GM10248 (cell line): ENCODE measurements at regions of chr10 and their contacts with region 1.

Region 1: GRCh38 chr10:89278034-89278535 is 23.8 kb upstream of the IFIT2 start:
- DNase-seq: no peak
- CTCF ChIP-seq: no peak

Region 2: DNA sequence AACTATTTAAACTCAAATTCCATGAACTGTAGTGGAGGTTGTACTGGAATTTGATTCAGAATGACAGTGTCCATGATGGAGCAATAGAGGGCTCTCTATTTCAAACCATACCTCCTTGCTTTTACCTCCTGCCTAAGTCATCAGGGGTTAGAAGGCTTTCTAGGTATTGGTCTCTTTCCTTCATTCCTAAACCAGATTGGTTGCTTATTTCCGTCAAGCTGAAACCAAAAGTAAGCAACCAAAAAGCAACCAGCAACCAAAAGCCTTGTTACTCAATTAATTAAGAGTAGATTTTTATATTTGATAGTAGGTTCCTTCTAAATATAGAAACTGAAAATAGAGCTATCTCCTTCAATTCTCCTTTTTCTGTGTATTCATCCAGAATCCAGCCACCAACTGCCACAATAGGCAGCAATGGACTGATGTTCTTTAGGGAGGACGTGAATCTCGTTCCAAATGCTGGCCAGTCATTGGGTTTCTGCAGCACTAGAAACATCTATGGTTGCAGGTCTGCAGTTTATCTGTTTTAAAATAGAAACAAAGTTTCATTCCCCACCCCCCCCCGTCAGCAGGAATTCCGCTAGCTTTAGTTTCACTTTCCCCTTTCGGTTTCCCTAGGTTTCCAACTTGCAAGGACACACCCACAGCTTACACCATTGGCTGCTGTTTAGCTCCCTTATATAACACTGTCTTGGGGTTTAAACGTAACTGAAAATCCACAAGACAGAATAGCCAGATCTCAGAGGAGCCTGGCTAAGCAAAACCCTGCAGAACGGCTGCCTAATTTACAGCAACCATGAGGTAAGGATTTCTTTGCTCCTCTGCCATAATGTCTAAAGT is 114.1 kb after region 1 on chr10 and contains the start of gene IFIT1:
- CTCF ChIA-PET with region 1: interaction called, 4 read pairs
- POLR2A ChIA-PET with region 1: interaction called, 11 read pairs
- DNase-seq: peak; percentile 59
- CTCF ChIP-seq: no peak

Region 3: GRCh38 chr10:89494575-89494974 is 216.5 kb after region 1 on chr10:
- CTCF ChIA-PET with region 1: no interaction called
- POLR2A ChIA-PET with region 1: no interaction called
- DNase-seq: no peak
- CTCF ChIP-seq: no peak